ENCODE measurements at regions of chr15 and their contacts with region 1.

Region 1: GRCh38 chr15:83380682-83381081 is 66.5 kb upstream of the SH3GL3 start:
- DNase-seq: peak; percentile 79
- H3K4me3 Mint-ChIP-seq: peak overlapping the region; percentile 17
- H3K27ac Mint-ChIP-seq: peak overlapping the region; percentile 87
- H3K4me1 Mint-ChIP-seq: peaks cover 37% of the 10 kb centered on the region
- H3K27me3 Mint-ChIP-seq: no peaks in the 10 kb centered on the region
- CTCF ChIP-seq: peak; percentile 26

Region 2: GRCh38 chr15:82730022-82730530 is 650.6 kb before region 1 on chr15:
- CTCF ChIA-PET with region 1: no interaction called
- POLR2A ChIA-PET with region 1: no interaction called
- intact Hi-C with region 1: no loop called
- DNase-seq: no peak
- H3K4me3 Mint-ChIP-seq: no peak overlapping the region
- H3K27ac Mint-ChIP-seq: no peak overlapping the region
- H3K4me1 Mint-ChIP-seq: no peaks in the 10 kb centered on the region
- H3K27me3 Mint-ChIP-seq: no peaks in the 10 kb centered on the region
- CTCF ChIP-seq: no peak

Region 3: DNA sequence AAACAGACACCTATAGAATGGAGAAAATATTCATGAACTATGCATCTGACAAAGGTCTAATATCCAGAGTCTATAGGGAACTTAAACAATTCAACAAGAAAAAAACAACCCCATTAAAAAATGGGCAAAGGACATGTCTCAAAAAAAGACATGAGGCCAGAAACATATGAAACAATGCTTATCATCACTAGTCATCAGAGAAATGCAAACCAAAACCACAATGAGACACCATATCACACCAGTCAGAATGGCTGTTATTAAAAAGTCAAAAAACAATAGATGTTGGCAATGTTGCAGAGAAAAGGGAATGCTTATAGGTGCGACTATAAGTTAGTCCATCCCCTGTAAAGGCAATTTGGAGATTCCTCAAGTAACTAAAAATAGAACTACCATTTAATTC is 161.7 kb before region 1 on chr15:
- CTCF ChIA-PET with region 1: no interaction called
- POLR2A ChIA-PET with region 1: no interaction called
- intact Hi-C with region 1: no loop called
- DNase-seq: no peak
- H3K4me3 Mint-ChIP-seq: no peak overlapping the region
- H3K27ac Mint-ChIP-seq: no peak overlapping the region
- H3K4me1 Mint-ChIP-seq: no peaks in the 10 kb centered on the region
- H3K27me3 Mint-ChIP-seq: no peaks in the 10 kb centered on the region
- CTCF ChIP-seq: no peak

Region 4: DNA sequence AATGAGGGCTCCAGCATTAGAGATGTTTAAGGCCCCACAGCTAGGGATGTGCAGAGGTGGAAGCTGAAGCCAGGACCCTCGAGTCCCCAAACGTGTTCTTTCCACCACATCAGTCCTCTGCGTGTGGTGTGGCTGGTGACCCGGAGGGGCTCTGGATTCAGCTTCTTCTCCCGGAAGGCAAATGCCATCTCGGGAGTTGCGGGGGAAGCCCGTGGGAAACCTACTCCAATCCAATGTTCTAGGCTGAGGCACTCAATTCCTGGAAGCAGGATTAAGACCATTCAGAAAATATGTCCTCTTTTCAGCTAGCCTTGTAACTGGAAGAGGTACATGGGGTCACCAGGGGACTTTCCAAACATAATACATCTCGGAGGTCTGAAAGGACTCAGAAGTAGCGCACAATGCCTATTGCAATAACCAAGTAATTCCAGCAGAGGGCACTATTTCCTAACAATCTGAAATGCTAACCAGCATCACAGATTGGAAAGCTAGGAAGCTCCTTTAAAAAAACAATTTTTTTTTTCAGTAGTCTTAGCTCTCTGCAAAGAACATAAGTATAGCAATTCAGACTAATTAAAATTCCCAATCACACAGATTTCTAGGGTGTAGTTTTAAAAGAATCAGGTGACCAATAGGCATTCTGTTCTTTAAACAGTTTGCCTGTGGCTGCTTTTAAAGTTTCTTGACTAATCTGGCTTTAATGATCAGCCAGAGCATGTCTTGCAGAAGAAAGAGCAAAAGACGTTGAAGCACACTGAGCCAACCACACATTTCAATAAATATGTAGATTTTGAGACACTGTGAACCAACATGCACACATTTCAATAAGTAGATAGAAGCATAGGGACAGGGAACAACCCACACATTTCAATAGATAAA is 132.3 kb before region 1 on chr15:
- CTCF ChIA-PET with region 1: interaction called, 114 read pairs
- POLR2A ChIA-PET with region 1: interaction called, 45 read pairs
- intact Hi-C with region 1: loop called (anchors 2 kb)
- DNase-seq: peak; percentile 72
- H3K4me3 Mint-ChIP-seq: no peak overlapping the region
- H3K27ac Mint-ChIP-seq: no peak overlapping the region
- H3K4me1 Mint-ChIP-seq: peaks cover 26% of the 10 kb centered on the region
- H3K27me3 Mint-ChIP-seq: no peaks in the 10 kb centered on the region
- CTCF ChIP-seq: peak; percentile 91

Region 5: DNA sequence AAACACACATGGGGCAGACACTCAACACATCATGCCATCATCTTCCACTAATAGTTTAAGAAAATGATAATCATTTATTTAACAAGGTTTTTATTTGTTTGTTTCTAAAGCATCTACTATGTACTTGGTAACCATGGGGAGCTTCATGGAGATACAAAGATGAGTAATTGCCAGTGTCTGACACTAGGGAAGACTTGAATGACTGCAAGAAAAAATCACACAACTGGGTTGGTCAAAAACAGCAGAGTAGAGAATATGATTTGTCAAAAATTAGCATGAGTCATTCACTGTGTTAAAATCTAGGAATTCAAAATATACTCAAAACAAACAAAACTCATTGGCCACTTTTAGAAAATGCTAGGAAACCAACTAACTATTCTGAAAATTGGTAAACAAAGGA is 102.5 kb before region 1 on chr15:
- CTCF ChIA-PET with region 1: interaction called, 13 read pairs
- POLR2A ChIA-PET with region 1: interaction called, 35 read pairs
- intact Hi-C with region 1: loop called (anchors 2 kb)
- DNase-seq: peak; percentile 70
- H3K4me3 Mint-ChIP-seq: no peak overlapping the region
- H3K27ac Mint-ChIP-seq: peak overlapping the region; percentile 99
- H3K4me1 Mint-ChIP-seq: peaks cover 41% of the 10 kb centered on the region
- H3K27me3 Mint-ChIP-seq: no peaks in the 10 kb centered on the region
- CTCF ChIP-seq: no peak

Region 6: GRCh38 chr15:83288381-83288801 is 92.3 kb before region 1 on chr15:
- CTCF ChIA-PET with region 1: interaction called, 11 read pairs
- POLR2A ChIA-PET with region 1: interaction called, 73 read pairs
- intact Hi-C with region 1: loop called (anchors 2 kb)
- DNase-seq: peak; percentile 85
- H3K4me3 Mint-ChIP-seq: peak overlapping the region; percentile 28
- H3K27ac Mint-ChIP-seq: peak overlapping the region; percentile 71
- H3K4me1 Mint-ChIP-seq: peaks cover 59% of the 10 kb centered on the region
- H3K27me3 Mint-ChIP-seq: no peaks in the 10 kb centered on the region
- CTCF ChIP-seq: no peak

Region 7: GRCh38 chr15:83323296-83323711 is 57.4 kb before region 1 on chr15:
- CTCF ChIA-PET with region 1: interaction called, 8 read pairs
- POLR2A ChIA-PET with region 1: interaction called, 22 read pairs
- intact Hi-C with region 1: no loop called
- DNase-seq: peak; percentile 85
- H3K4me3 Mint-ChIP-seq: no peak overlapping the region
- H3K27ac Mint-ChIP-seq: peak overlapping the region; percentile 46
- H3K4me1 Mint-ChIP-seq: peaks cover 52% of the 10 kb centered on the region
- H3K27me3 Mint-ChIP-seq: no peaks in the 10 kb centered on the region
- CTCF ChIP-seq: no peak

Region 8: GRCh38 chr15:83365370-83365938 is 15.2 kb before region 1 on chr15:
- CTCF ChIA-PET with region 1: interaction called, 4 read pairs
- POLR2A ChIA-PET with region 1: interaction called, 96 read pairs
- intact Hi-C with region 1: no loop called
- DNase-seq: peak; percentile 72
- H3K4me3 Mint-ChIP-seq: peak overlapping the region; percentile 74
- H3K27ac Mint-ChIP-seq: peak overlapping the region; percentile 95
- H3K4me1 Mint-ChIP-seq: peaks cover 29% of the 10 kb centered on the region
- H3K27me3 Mint-ChIP-seq: no peaks in the 10 kb centered on the region
- CTCF ChIP-seq: no peak

Region 9: GRCh38 chr15:83413054-83413719 is 32.5 kb after region 1 on chr15:
- CTCF ChIA-PET with region 1: no interaction called
- POLR2A ChIA-PET with region 1: no interaction called
- intact Hi-C with region 1: no loop called
- DNase-seq: no peak
- H3K4me3 Mint-ChIP-seq: no peak overlapping the region
- H3K27ac Mint-ChIP-seq: no peak overlapping the region
- H3K4me1 Mint-ChIP-seq: no peaks in the 10 kb centered on the region
- H3K27me3 Mint-ChIP-seq: no peaks in the 10 kb centered on the region
- CTCF ChIP-seq: no peak

Region 10: DNA sequence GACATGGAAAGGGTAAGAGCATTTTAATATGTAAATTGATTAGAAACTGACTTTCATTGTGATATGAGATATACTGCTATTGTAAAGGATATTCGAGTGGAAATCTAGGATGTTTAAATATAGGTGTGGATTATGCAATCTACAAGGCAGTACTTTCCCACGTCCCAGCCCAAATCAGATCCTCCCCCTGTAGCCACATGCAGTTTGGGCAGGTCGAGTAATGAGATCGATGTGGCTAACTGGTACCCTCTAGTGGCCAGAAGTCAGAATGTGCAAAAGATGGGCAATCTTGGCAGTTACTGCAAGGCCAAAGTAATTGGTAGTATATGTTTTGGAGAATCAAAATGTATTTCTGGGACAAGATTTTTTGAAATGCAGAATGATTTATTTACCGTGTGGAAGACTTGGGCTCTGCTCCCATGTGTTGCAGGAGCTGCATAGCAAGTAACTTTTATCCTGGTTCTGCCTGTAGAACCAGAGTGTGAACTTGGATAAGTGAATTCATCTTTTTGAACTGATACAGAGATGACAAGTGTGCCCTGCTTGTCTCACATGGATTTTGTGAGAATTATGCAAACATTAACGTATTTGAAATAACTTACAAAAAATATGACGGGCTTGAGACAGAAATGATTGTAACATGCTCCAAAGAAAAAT is 178.8 kb after region 1 on chr15:
- CTCF ChIA-PET with region 1: interaction called, 4 read pairs
- POLR2A ChIA-PET with region 1: no interaction called
- intact Hi-C with region 1: loop called (anchors 5 kb)
- DNase-seq: peak; percentile 88
- H3K4me3 Mint-ChIP-seq: no peak overlapping the region
- H3K27ac Mint-ChIP-seq: no peak overlapping the region
- H3K4me1 Mint-ChIP-seq: peaks cover 6% of the 10 kb centered on the region
- H3K27me3 Mint-ChIP-seq: no peaks in the 10 kb centered on the region
- CTCF ChIP-seq: peak; percentile 79

Measured in MCF 10A (cell line).